ENCODE measurements at regions of chr6 and their contacts with region 1.

Region 1: DNA sequence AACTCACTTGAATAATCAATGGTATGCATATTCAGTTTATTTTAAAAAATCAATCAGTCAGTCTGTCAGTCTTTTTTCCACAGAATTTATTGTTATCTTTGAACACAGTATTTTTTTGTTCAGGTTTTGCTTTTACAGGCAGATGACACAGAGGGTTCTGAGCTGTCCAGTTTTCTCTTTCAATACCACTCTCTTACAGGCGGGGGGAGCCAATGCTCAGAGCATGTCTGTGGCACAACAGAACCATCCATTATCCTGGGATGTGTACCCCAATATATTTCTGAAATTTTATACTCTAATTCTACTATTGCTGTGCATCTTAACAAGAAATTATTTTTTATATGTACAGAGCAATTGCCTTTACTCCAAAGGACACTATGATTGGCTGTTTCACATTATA is 21.2 kb downstream of the ROS1 start:
- DNase-seq: no peak
- H3K4me3 Mint-ChIP-seq: no peak overlapping the region
- H3K27ac Mint-ChIP-seq: no peak overlapping the region
- H3K4me1 Mint-ChIP-seq: no peaks in the 10 kb centered on the region
- H3K27me3 Mint-ChIP-seq: peaks cover 5% of the 10 kb centered on the region

Region 2: DNA sequence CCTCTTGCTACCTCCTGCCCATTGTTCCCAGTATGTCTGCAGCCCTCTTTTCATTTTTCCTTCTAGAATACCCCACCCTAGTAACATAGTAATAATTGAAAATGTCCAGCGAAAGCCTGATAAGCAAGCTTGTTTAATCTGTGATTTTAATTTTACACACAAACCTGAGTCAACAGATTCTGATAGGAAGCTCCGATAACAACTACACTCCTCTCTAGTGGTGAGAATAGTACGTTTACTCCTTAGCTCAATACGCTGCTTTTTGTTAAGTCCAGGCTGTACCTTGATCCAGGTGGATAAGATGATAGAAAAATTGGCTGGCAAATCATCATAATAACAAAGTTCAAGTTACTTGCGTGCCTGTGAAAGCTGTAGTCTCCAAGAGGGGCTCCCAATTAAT is 52.4 kb after region 1 on chr6:
- CTCF ChIA-PET with region 1: no interaction called
- intact Hi-C with region 1: no loop called
- DNase-seq: no peak
- H3K4me3 Mint-ChIP-seq: no peak overlapping the region
- H3K27ac Mint-ChIP-seq: no peak overlapping the region
- H3K4me1 Mint-ChIP-seq: no peaks in the 10 kb centered on the region
- H3K27me3 Mint-ChIP-seq: peaks cover 4% of the 10 kb centered on the region

Region 3: DNA sequence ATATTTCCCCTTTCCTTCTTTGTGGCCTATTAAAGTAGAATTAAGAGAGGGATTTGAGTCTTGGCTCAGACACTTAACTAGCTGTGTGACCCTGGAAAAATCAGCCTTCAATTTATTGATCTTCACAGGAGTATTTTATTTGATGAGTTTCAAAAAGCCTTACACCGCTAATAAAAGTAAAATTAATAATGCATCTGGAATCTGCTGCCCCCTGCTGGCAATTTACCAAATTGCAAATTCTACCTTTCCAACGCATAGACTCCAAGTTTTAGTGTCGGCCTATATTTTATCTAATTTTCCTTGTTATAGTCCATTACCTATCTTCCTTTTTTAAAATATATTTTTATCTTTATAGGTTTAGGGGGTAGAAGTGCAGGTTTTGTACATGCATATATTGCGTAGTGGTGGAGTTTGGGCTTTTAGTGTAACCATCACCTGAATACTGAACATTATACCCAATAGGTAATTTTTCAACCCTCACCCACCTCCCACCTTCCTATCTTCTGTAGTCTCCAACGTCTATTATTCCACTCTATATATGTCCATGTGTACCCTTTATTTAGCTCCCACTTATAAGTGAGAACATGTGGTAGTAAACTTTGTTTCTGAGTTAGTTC is 151.4 kb after region 1 on chr6:
- CTCF ChIA-PET with region 1: interaction called, 5 read pairs
- intact Hi-C with region 1: loop called (anchors 1 kb)
- DNase-seq: peak; percentile 78
- H3K4me3 Mint-ChIP-seq: no peak overlapping the region
- H3K27ac Mint-ChIP-seq: no peak overlapping the region
- H3K4me1 Mint-ChIP-seq: peaks cover under 1% of the 10 kb centered on the region
- H3K27me3 Mint-ChIP-seq: peaks cover 2% of the 10 kb centered on the region

Region 4: GRCh38 chr6:117585647-117586046 is 181.1 kb after region 1 on chr6:
- CTCF ChIA-PET with region 1: no interaction called
- intact Hi-C with region 1: no loop called
- DNase-seq: no peak
- H3K4me3 Mint-ChIP-seq: no peak overlapping the region
- H3K27ac Mint-ChIP-seq: no peak overlapping the region
- H3K4me1 Mint-ChIP-seq: peaks cover 23% of the 10 kb centered on the region
- H3K27me3 Mint-ChIP-seq: no peaks in the 10 kb centered on the region